SK-N-SH (cell line): ENCODE measurements at regions of chr1 and their contacts with region 1.

Region 1: DNA sequence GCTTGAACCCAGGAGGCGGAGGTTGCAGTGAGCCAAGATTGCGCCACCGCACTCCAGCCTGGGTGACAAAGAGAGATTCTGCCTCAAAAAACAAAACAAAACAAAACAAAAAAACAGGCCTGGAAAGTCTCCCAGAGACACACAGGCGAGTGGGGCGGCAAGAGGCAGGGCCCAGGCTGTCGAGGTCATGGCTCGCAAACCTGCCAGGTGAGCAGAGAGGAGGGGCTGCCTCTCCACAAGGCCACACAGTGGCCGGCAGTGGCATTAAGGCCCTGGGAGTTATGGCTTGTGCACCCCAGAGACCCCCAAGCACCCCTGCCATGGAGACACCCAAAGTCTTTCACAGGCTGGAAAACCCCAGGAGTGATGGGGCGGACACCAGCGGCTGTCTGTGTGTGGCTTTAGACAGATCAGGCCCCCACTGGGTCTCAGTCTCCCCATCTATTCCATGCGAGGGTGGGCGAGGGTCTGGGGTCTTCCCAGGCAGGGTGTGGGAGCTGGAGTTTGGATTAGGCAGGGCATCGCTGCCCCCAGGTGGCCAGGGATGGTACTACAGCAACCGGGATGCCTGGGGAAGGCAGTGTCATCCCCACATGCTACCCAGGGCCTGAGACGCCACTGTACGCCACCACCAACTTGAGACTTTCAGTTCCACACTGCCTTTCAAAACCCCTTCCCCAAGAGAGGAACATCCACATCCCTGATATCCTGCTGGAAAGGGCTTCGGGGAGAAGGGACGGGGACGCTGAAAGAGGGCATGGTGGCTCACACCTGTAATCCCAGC is 7.3 kb upstream of the CTRC start:
- DNase-seq: peak; percentile 93
- H3K4me3 ChIP-seq: no peak overlapping the region; a peak in 1 of 4 replicates
- H3K27ac ChIP-seq: no peak overlapping the region
- H3K4me1 ChIP-seq: no peaks in the 10 kb centered on the region; a peak in 1 of 4 replicates
- H3K27me3 ChIP-seq: no peaks in the 10 kb centered on the region
- CTCF ChIP-seq: peak; percentile 98
- EP300 ChIP-seq: no peak
- RAD21 ChIP-seq: peak; percentile 93

Region 2: GRCh38 chr1:15304701-15305467 is 126.1 kb before region 1 on chr1:
- CTCF ChIA-PET with region 1: interaction called, 26 read pairs
- POLR2A ChIA-PET with region 1: no interaction called
- DNase-seq: peak; percentile 79
- H3K4me3 ChIP-seq: peak overlapping the region in 1 of 2 experiments; percentile 38; a peak in 1 of 4 replicates
- H3K27ac ChIP-seq: no peak overlapping the region
- H3K4me1 ChIP-seq: peaks cover 0 to 6% of the 10 kb centered on the region in 2 experiments; a peak in 1 of 4 replicates
- H3K27me3 ChIP-seq: no peaks in the 10 kb centered on the region
- CTCF ChIP-seq: peak; percentile 94
- EP300 ChIP-seq: no peak
- RAD21 ChIP-seq: peak; percentile 84

Region 3: GRCh38 chr1:15323351-15323988 is 107.5 kb before region 1 on chr1:
- CTCF ChIA-PET with region 1: interaction called, 311 read pairs
- POLR2A ChIA-PET with region 1: no interaction called
- DNase-seq: peak; percentile 82
- H3K4me3 ChIP-seq: peak overlapping the region in 1 of 2 experiments; percentile 30; a peak in 1 of 4 replicates
- H3K27ac ChIP-seq: peak overlapping the region in 1 of 2 experiments; percentile 68; a peak in 2 of 4 replicates
- H3K4me1 ChIP-seq: peaks cover 0 to 38% of the 10 kb centered on the region in 2 experiments; a peak in 1 of 4 replicates
- H3K27me3 ChIP-seq: no peaks in the 10 kb centered on the region
- CTCF ChIP-seq: peak; percentile 98
- EP300 ChIP-seq: no peak
- RAD21 ChIP-seq: peak; percentile 83

Region 4: GRCh38 chr1:15409388-15410222 is 21.4 kb before region 1 on chr1 and contains the start of gene EFHD2:
- CTCF ChIA-PET with region 1: interaction called, 35 read pairs
- POLR2A ChIA-PET with region 1: no interaction called
- DNase-seq: peak; percentile 96
- H3K4me3 ChIP-seq: peak within 1 kb of the TSS; percentile 84 to 92
- H3K27ac ChIP-seq: peak within 1 kb of the TSS; percentile 65 to 77; a peak in 3 of 4 replicates
- H3K4me1 ChIP-seq: peaks cover 30 to 36% of the 10 kb centered on the region in 2 experiments; a peak in 3 of 4 replicates
- H3K27me3 ChIP-seq: no peaks in the 10 kb centered on the region
- CTCF ChIP-seq: no peak
- EP300 ChIP-seq: no peak
- RAD21 ChIP-seq: no peak
- polyA plus RNA-seq, gene EFHD2: 45.1 and 59.8 TPM in 2 replicates

Region 5: GRCh38 chr1:15444468-15445389 is 13.8 kb after region 1 on chr1:
- CTCF ChIA-PET with region 1: interaction called, 20 read pairs
- POLR2A ChIA-PET with region 1: no interaction called
- DNase-seq: no peak
- H3K4me3 ChIP-seq: no peak overlapping the region
- H3K27ac ChIP-seq: no peak overlapping the region
- H3K4me1 ChIP-seq: peaks cover 0 to 3% of the 10 kb centered on the region in 2 experiments; a peak in 1 of 4 replicates
- H3K27me3 ChIP-seq: no peaks in the 10 kb centered on the region
- CTCF ChIP-seq: no peak
- EP300 ChIP-seq: no peak
- RAD21 ChIP-seq: no peak

Region 6: DNA sequence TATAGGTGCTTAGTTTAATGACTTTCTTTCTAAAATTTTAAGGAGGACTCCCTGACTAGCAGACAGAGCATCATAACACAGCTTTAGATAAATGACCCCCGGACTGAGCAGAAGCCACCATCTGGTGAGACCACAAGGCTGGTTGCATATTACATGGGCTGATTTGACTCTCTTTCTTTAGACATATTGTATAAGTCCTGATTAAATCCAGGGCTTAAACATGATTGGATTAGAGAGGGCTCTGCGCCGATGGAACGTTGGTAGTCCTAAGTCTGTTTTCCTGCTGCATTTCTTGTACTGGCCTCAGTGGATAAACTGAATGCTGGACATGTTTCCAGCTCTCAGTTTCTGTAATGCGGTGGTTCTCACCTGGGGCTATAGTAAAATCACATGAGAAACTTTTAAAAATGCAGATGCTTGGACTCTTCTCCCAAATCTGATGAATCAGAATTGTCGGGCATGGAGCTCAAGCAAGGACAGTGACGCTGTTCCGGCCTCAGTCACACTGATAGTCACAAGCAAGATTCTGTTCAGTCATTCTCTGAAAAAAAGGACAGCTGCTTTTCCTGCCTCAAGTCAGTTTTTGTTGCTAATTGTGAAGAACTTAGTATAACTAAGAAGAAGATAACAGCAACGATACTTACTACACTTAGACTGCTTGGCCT is 202.9 kb after region 1 on chr1:
- CTCF ChIA-PET with region 1: no interaction called
- POLR2A ChIA-PET with region 1: no interaction called
- DNase-seq: no peak
- H3K4me3 ChIP-seq: 0 out of 4 replicates have a peak overlapping the region, but pooled peaks of 1 of the 2 experiments have one; percentile 23
- H3K27ac ChIP-seq: no peak overlapping the region
- H3K4me1 ChIP-seq: no peaks in the 10 kb centered on the region
- H3K27me3 ChIP-seq: no peaks in the 10 kb centered on the region
- CTCF ChIP-seq: no peak
- EP300 ChIP-seq: no peak
- RAD21 ChIP-seq: no peak